MCF 10A (cell line): ENCODE measurements at regions of chr1 and their contacts with region 1.

Region 1: GRCh38 chr1:209549443-209550205 is 33.9 kb upstream of the CAMK1G start:
- DNase-seq: no peak
- H3K4me3 Mint-ChIP-seq: no peak overlapping the region
- H3K27ac Mint-ChIP-seq: no peak overlapping the region
- H3K4me1 Mint-ChIP-seq: peaks cover 24% of the 10 kb centered on the region
- H3K27me3 Mint-ChIP-seq: no peaks in the 10 kb centered on the region
- CTCF ChIP-seq: no peak

Region 2: GRCh38 chr1:209335178-209335577 is 214.4 kb before region 1 on chr1:
- CTCF ChIA-PET with region 1: no interaction called
- POLR2A ChIA-PET with region 1: no interaction called
- intact Hi-C with region 1: no loop called
- DNase-seq: peak; percentile 75
- H3K4me3 Mint-ChIP-seq: no peak overlapping the region
- H3K27ac Mint-ChIP-seq: no peak overlapping the region
- H3K4me1 Mint-ChIP-seq: peaks cover 5% of the 10 kb centered on the region
- H3K27me3 Mint-ChIP-seq: no peaks in the 10 kb centered on the region
- CTCF ChIP-seq: peak; percentile 96

Region 3: DNA sequence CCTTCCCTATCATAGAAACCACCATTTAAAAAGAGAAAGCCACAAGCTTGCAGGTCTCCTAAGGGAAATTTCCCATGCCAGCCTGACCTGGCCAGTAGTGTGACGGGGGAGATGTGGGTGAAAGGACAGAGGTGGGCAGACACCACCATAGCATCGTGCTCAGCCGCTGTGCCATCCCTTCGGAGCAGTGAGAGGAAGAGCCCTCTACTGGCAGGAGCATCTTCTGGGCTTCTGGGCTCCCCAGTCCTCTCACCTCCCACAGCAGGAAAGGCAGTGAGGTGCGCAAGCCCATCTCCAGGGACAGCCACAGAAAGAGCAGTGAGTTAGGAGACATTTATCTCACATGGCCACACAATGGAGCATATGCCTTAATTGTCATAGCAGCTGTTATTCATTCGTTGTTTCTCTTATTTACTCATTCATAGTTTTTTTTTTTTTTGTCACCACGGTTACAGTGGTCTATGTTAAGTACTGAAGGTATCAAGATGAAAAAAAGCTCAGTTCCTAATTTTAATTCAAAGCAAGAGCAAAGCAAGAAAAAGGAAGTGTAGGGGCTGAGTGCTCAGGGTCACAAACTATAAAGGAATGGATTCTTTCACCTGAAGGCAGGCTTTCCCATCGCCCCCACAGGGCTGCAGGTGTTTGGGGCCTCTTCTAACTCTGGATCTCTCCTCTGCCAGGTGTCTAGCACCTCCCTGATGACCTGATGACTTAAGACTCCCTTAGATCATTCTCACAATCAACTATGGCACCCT is 15.0 kb before region 1 on chr1:
- CTCF ChIA-PET with region 1: interaction called, 9 read pairs
- POLR2A ChIA-PET with region 1: interaction called, 111 read pairs
- intact Hi-C with region 1: no loop called
- DNase-seq: no peak
- H3K4me3 Mint-ChIP-seq: no peak overlapping the region
- H3K27ac Mint-ChIP-seq: no peak overlapping the region
- H3K4me1 Mint-ChIP-seq: peaks cover 55% of the 10 kb centered on the region
- H3K27me3 Mint-ChIP-seq: no peaks in the 10 kb centered on the region
- CTCF ChIP-seq: no peak